ENCODE measurements at regions of chr1 and their contacts with region 1.

Region 1: GRCh38 chr1:32247983-32248889 is 1.2 kb downstream of the FAM167B start:
- DNase-seq: peak; percentile 80 to 95 (median 93)
- H3K4me3 ChIP-seq: no peak overlapping the region
- H3K27ac ChIP-seq: peak overlapping the region in 4 of 5 donors; percentile 32 to 89 (median 60)
- H3K4me1 ChIP-seq: peaks cover 0 to 19% of the 10 kb centered on the region in 2 donors
- H3K27me3 ChIP-seq: no peaks in the 10 kb centered on the region
- CTCF ChIP-seq: peak; percentile 73 to 92 (median 80)
- POLR2A ChIP-seq: no peak

Region 2: GRCh38 chr1:32111789-32112188 is 136.4 kb before region 1 on chr1:
- intact Hi-C with region 1: no loop called
- DNase-seq: no peak
- H3K4me3 ChIP-seq: no peak overlapping the region
- H3K27ac ChIP-seq: peak overlapping the region in 1 of 5 donors; percentile 20
- H3K4me1 ChIP-seq: peaks cover 25 to 51% of the 10 kb centered on the region in 2 donors
- H3K27me3 ChIP-seq: no peaks in the 10 kb centered on the region
- CTCF ChIP-seq: no peak
- POLR2A ChIP-seq: no peak

Region 3: GRCh38 chr1:32163405-32163804 is 84.8 kb before region 1 on chr1:
- intact Hi-C with region 1: no loop called
- DNase-seq: no peak
- H3K4me3 ChIP-seq: no peak overlapping the region
- H3K27ac ChIP-seq: no peak overlapping the region
- H3K4me1 ChIP-seq: no peaks in the 10 kb centered on the region
- H3K27me3 ChIP-seq: no peaks in the 10 kb centered on the region
- CTCF ChIP-seq: no peak
- POLR2A ChIP-seq: no peak

Region 4: GRCh38 chr1:32200226-32201010 is 47.8 kb before region 1 on chr1 and contains the start of gene CCDC28B:
- intact Hi-C with region 1: loop called in 1 of 2 experiments (anchors 5 kb)
- DNase-seq: peak; percentile 62 to 86 (median 76)
- H3K4me3 ChIP-seq: peak within 1 kb of the TSS in 3 of 4 donors; percentile 51 to 77 (median 56)
- H3K27ac ChIP-seq: peak within 1 kb of the TSS; percentile 20 to 90 (median 76)
- H3K4me1 ChIP-seq: peaks cover 35 to 49% of the 10 kb centered on the region in 2 donors
- H3K27me3 ChIP-seq: no peaks in the 10 kb centered on the region
- CTCF ChIP-seq: no peak
- POLR2A ChIP-seq: peak in 1 of 2 donors; percentile 20
- total RNA-seq, gene CCDC28B: 11.4 to 34.0 (median 20.5) TPM

Measured in adrenal gland (tissue), 19 donors.